B cell (primary cell): ENCODE measurements at regions of chr7 and their contacts with region 1.

Region 1: GRCh38 chr7:143240291-143241168 is 18.7 kb downstream of the TAS2R40 start:
- DNase-seq: peak; percentile 81
- ATAC-seq: peak; percentile 91
- H3K4me3 ChIP-seq: no peak overlapping the region
- H3K4me3 Mint-ChIP-seq: no peak overlapping the region
- H3K27ac ChIP-seq: no peak overlapping the region
- H3K27ac Mint-ChIP-seq: no peak overlapping the region
- H3K4me1 ChIP-seq: peaks cover 4 to 8% of the 10 kb centered on the region in 2 donors
- H3K4me1 Mint-ChIP-seq: peaks cover 7% of the 10 kb centered on the region
- H3K27me3 ChIP-seq: peaks cover 0 to 3% (median 0%) of the 10 kb centered on the region in 4 experiments
- H3K27me3 Mint-ChIP-seq: peaks cover 27% of the 10 kb centered on the region
- CTCF ChIP-seq: peak; percentile 98

Region 2: GRCh38 chr7:143229054-143229790 is 11.3 kb before region 1 on chr7:
- CTCF ChIA-PET with region 1: interaction called, 22 read pairs
- POLR2A ChIA-PET with region 1: no interaction called
- intact Hi-C with region 1: no loop called
- DNase-seq: no peak
- ATAC-seq: no peak
- H3K4me3 ChIP-seq: no peak overlapping the region
- H3K4me3 Mint-ChIP-seq: no peak overlapping the region
- H3K27ac ChIP-seq: no peak overlapping the region
- H3K27ac Mint-ChIP-seq: no peak overlapping the region
- H3K4me1 ChIP-seq: no peaks in the 10 kb centered on the region
- H3K4me1 Mint-ChIP-seq: no peaks in the 10 kb centered on the region
- H3K27me3 ChIP-seq: peaks cover 0 to 4% (median 0%) of the 10 kb centered on the region in 4 experiments
- H3K27me3 Mint-ChIP-seq: peaks cover 4% of the 10 kb centered on the region
- CTCF ChIP-seq: no peak

Region 3: DNA sequence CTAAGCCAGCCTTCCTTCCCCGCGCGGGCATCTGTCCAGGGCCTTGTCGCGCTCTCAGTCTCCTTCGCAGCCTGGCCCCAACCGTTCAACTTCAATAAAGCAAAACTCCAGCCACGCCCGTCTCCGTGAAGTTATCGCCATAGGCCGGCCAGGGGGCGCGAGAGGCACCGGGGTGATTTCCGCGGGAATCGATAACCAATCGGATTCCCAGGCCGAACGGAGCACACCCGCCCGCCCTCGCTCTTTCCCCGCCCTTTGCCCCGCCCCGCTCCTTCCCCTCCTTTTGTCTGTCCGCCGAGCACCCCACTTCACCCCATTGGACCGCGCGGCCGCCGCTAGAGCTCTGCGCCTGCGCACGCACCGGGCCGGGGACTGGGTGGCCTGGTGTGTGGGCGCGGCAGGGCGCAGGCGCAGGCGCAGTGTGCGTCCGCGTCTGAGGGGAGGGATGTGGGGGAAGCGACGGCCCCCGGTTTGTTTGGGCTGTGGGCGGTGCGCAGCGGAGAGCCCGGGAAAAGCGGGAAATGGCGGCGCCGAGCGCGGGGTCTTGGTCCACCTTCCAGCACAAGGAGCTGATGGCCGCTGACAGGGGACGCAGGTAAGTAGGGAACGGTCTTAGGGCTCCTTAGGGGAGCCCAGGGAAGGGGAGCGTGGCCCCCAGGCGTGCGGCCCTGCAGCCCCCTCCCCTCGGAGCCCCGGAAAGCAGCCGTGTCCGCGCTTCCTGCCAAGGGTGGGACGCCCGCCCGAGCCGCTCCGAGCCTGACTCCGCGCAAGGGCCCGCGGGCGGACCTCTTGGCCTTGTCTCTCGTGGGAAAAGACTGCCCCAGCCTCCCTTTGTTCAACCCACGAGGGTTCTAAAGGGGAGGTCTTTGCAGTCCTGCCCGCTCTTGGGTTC is 47.7 kb after region 1 on chr7 and contains the start of gene CASP2:
- CTCF ChIA-PET with region 1: interaction called, 29 read pairs
- POLR2A ChIA-PET with region 1: no interaction called
- intact Hi-C with region 1: loop called (anchors 1 kb)
- DNase-seq: peak; percentile 99
- ATAC-seq: peak; percentile 90
- H3K4me3 ChIP-seq: peak within 1 kb of the TSS; percentile 73 to 95 (median 91)
- H3K4me3 Mint-ChIP-seq: peak within 1 kb of the TSS; percentile 95
- H3K27ac ChIP-seq: peak within 1 kb of the TSS; percentile 82 to 86
- H3K27ac Mint-ChIP-seq: peak within 1 kb of the TSS; percentile 84
- H3K4me1 ChIP-seq: peaks cover 42 to 43% of the 10 kb centered on the region in 2 donors
- H3K4me1 Mint-ChIP-seq: peaks cover 59% of the 10 kb centered on the region
- H3K27me3 ChIP-seq: no peaks in the 10 kb centered on the region
- H3K27me3 Mint-ChIP-seq: no peaks in the 10 kb centered on the region
- CTCF ChIP-seq: peak; percentile 36
- total RNA-seq, gene CASP2: 66.5 and 71.1 TPM in 2 replicates

Region 4: GRCh38 chr7:143337216-143337615 is 96.7 kb after region 1 on chr7:
- CTCF ChIA-PET with region 1: interaction called, 11 read pairs
- POLR2A ChIA-PET with region 1: no interaction called
- intact Hi-C with region 1: no loop called
- DNase-seq: no peak
- ATAC-seq: no peak
- H3K4me3 ChIP-seq: no peak overlapping the region
- H3K4me3 Mint-ChIP-seq: no peak overlapping the region
- H3K27ac ChIP-seq: no peak overlapping the region
- H3K27ac Mint-ChIP-seq: no peak overlapping the region
- H3K4me1 ChIP-seq: no peaks in the 10 kb centered on the region
- H3K4me1 Mint-ChIP-seq: no peaks in the 10 kb centered on the region
- H3K27me3 ChIP-seq: peaks cover 0 to 8% (median 4%) of the 10 kb centered on the region in 4 experiments
- H3K27me3 Mint-ChIP-seq: peaks cover 30% of the 10 kb centered on the region
- CTCF ChIP-seq: no peak

Region 5: DNA sequence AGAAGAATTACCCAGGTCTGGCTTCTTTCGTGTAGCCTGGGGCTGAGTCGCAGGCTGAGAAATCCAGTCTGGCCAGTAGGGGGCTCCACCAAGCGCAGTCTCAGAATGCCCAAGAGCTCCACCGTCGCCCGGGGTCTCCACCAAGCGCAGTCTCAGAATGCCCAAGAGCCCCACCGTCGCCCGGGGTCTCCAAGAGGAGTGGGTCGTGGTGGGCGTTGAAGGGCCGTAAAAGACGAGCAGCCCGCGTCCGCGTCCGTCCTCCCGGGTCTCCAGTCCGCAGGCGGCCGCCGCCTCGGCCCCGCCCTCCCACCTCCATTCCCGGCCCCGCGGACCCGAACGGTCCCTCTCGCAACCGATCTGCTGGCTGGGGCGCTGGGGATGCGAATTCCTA is 139.7 kb after region 1 on chr7:
- CTCF ChIA-PET with region 1: interaction called, 19 read pairs
- POLR2A ChIA-PET with region 1: no interaction called
- intact Hi-C with region 1: loop called (anchors 1 kb)
- DNase-seq: peak; percentile 92
- ATAC-seq: peak; percentile 55
- H3K4me3 ChIP-seq: peak overlapping the region; percentile 1 to 99 (median 90)
- H3K4me3 Mint-ChIP-seq: peak overlapping the region; percentile 92
- H3K27ac ChIP-seq: peak overlapping the region; percentile 87 to 89
- H3K27ac Mint-ChIP-seq: peak overlapping the region; percentile 93
- H3K4me1 ChIP-seq: peaks cover 43 to 53% of the 10 kb centered on the region in 2 donors
- H3K4me1 Mint-ChIP-seq: peaks cover 28% of the 10 kb centered on the region
- H3K27me3 ChIP-seq: no peaks in the 10 kb centered on the region
- H3K27me3 Mint-ChIP-seq: no peaks in the 10 kb centered on the region
- CTCF ChIP-seq: peak; percentile 85

Region 6: GRCh38 chr7:143422033-143422432 is 181.5 kb after region 1 on chr7:
- CTCF ChIA-PET with region 1: interaction called, 172 read pairs
- POLR2A ChIA-PET with region 1: interaction called, 8 read pairs
- intact Hi-C with region 1: no loop called
- DNase-seq: no peak
- ATAC-seq: no peak
- H3K4me3 ChIP-seq: no peak overlapping the region
- H3K4me3 Mint-ChIP-seq: no peak overlapping the region
- H3K27ac ChIP-seq: no peak overlapping the region
- H3K27ac Mint-ChIP-seq: no peak overlapping the region
- H3K4me1 ChIP-seq: peaks cover 0 to 3% of the 10 kb centered on the region in 2 donors
- H3K4me1 Mint-ChIP-seq: peaks cover 3% of the 10 kb centered on the region
- H3K27me3 ChIP-seq: peaks cover 0 to 4% (median 1%) of the 10 kb centered on the region in 4 experiments
- H3K27me3 Mint-ChIP-seq: peaks cover 18% of the 10 kb centered on the region
- CTCF ChIP-seq: no peak